Testis (tissue), 5 donors: ENCODE measurements at regions of chr1 and their contacts with region 1.

Region 1: GRCh38 chr1:50774759-50775351 is 185.2 kb downstream of the FAF1 start:
- DNase-seq: no peak
- H3K4me3 ChIP-seq: no peak overlapping the region
- H3K27ac ChIP-seq: no peak overlapping the region
- H3K4me1 ChIP-seq: no peaks in the 10 kb centered on the region
- H3K27me3 ChIP-seq: no peaks in the 10 kb centered on the region
- CTCF ChIP-seq: peak; percentile 57 to 75 (median 60)
- POLR2A ChIP-seq: no peak

Region 2: GRCh38 chr1:50358962-50359361 is 415.9 kb before region 1 on chr1:
- intact Hi-C with region 1: no loop called
- DNase-seq: peak; percentile 19
- H3K4me3 ChIP-seq: peak overlapping the region in 1 of 2 donors; percentile 26
- H3K27ac ChIP-seq: no peak overlapping the region
- H3K4me1 ChIP-seq: no peaks in the 10 kb centered on the region
- H3K27me3 ChIP-seq: no peaks in the 10 kb centered on the region
- CTCF ChIP-seq: no peak
- POLR2A ChIP-seq: no peak

Region 3: DNA sequence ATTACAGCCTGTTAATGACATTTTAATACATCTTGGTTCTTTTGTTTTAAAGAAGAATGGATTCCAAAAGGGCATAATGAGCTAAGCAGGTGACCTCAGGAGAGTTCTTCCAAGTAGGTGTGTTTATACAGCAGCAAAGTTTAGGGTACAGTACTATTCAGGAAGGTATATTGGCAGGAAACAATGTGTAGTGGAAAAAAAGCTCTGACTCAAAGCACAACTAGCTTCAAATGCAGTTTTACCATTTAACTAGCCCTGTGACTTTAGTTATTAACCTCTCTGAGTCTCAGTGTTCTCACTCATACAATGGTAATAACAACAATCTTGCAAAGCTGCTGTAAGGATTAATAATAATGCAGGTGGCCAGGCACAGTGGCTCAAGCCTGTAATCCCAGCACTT is 155.3 kb after region 1 on chr1:
- intact Hi-C with region 1: loop called (anchors 10 kb)
- DNase-seq: no peak
- H3K4me3 ChIP-seq: no peak overlapping the region
- H3K27ac ChIP-seq: no peak overlapping the region
- H3K4me1 ChIP-seq: no peaks in the 10 kb centered on the region
- H3K27me3 ChIP-seq: no peaks in the 10 kb centered on the region
- CTCF ChIP-seq: no peak
- POLR2A ChIP-seq: no peak